Left cardiac atrium (tissue), 4 donors: ENCODE measurements at regions of chr14 and their contacts with region 1.

Region 1: GRCh38 chr14:96297000-96297399 is 41.0 kb downstream of the BDKRB1 start:
- DNase-seq: no peak
- ATAC-seq: no peak

Region 2: DNA sequence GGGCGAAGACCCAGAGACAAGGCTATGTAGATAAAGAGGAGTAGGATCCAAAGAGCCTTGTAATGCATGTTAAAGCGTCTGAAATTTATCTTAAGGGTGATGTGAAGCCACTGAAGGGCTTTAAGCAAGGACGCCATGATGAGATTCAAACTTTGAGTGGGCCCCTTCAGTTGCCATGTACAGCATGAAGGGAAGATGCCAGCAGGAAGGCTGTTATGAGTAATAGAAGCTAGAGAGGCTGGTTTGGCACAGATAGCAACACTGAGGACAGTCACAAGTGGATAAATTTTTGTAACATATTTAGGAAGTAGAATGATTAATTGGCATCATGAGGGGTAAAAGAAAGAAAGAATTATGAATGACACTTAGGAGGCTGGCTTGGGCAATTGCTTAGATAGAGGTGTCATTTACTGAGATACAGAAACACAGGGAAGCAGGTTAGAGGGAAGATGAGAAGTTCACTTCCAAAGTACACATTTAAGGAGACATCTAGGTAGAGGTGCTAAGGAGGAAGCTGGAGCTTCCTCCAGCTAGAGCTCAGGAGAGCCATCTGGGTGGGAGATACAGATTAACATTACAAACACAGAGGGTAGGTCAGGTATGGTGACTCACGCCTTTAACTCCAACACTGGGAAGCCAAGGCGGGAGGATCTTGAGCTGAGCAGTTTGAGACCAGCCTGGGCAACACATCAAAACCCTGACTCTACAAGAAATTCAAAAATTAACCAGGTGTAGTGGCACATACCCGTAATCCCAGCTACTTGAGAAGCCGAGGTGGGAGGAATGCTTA is 52.5 kb after region 1 on chr14:
- intact Hi-C with region 1: loop called in 1 of 2 experiments (anchors 10 kb)
- DNase-seq: no peak
- ATAC-seq: peak in 1 of 2 donors; percentile 80